ENCODE measurements at regions of chr4 and their contacts with region 1.

Region 1: GRCh38 chr4:127965062-127965802 is at the starts of genes ABHD18 and MFSD8:
- DNase-seq: peak; percentile 98 to 99
- ATAC-seq: peak; percentile 97 to 98
- H3K4me3 ChIP-seq: peak within 1 kb of the TSS; percentile 78 to 93 (median 86)
- H3K27ac ChIP-seq: peak within 1 kb of the TSS; percentile 95 to 99 (median 97)
- H3K4me1 ChIP-seq: peaks cover 8 to 18% of the 10 kb centered on the region in 2 donors
- H3K27me3 ChIP-seq: no peaks in the 10 kb centered on the region
- CTCF ChIP-seq: peak; percentile 60 to 70 (median 69)
- POLR2A ChIP-seq: peak; percentile 80 to 87
- total RNA-seq, gene ABHD18: 3.9 to 7.8 (median 5.8) TPM
- total RNA-seq, gene MFSD8: 5.6 to 13.2 (median 7.5) TPM

Region 2: GRCh38 chr4:127632420-127633403 is 332.5 kb before region 1 on chr4 and contains the start of gene INTU:
- in situ Hi-C with region 1: loop called in 2 of 4 experiments (anchors 25 kb)
- intact Hi-C with region 1: loop called (anchors 10 kb)
- DNase-seq: peak; percentile 89 to 91
- ATAC-seq: peak; percentile 100
- H3K4me3 ChIP-seq: peak within 1 kb of the TSS; percentile 62 to 94 (median 76)
- H3K27ac ChIP-seq: peak within 1 kb of the TSS in 2 of 4 donors; percentile 34 to 58
- H3K4me1 ChIP-seq: peaks cover 12 to 18% of the 10 kb centered on the region in 2 donors
- H3K27me3 ChIP-seq: no peaks in the 10 kb centered on the region
- CTCF ChIP-seq: no peak
- POLR2A ChIP-seq: no peak
- total RNA-seq, gene INTU: 0.65 to 2.6 (median 1.7) TPM

Region 3: GRCh38 chr4:127782274-127783025 is 182.8 kb before region 1 on chr4 and contains the start of gene HSPA4L:
- in situ Hi-C with region 1: loop called in 1 of 4 experiments (anchors 25 kb)
- intact Hi-C with region 1: loop called (anchors 1 kb)
- DNase-seq: peak; percentile 46 to 74
- ATAC-seq: peak; percentile 85 to 91
- H3K4me3 ChIP-seq: peak within 1 kb of the TSS; percentile 68 to 96 (median 80)
- H3K27ac ChIP-seq: peak within 1 kb of the TSS; percentile 67 to 80 (median 78)
- H3K4me1 ChIP-seq: peaks cover 0 to 10% of the 10 kb centered on the region in 2 donors
- H3K27me3 ChIP-seq: no peaks in the 10 kb centered on the region
- CTCF ChIP-seq: peak; percentile 22 to 34 (median 31)
- POLR2A ChIP-seq: peak; percentile 36 to 73
- total RNA-seq, gene HSPA4L: 0.36 to 1.2 (median 0.74) TPM

Region 4: DNA sequence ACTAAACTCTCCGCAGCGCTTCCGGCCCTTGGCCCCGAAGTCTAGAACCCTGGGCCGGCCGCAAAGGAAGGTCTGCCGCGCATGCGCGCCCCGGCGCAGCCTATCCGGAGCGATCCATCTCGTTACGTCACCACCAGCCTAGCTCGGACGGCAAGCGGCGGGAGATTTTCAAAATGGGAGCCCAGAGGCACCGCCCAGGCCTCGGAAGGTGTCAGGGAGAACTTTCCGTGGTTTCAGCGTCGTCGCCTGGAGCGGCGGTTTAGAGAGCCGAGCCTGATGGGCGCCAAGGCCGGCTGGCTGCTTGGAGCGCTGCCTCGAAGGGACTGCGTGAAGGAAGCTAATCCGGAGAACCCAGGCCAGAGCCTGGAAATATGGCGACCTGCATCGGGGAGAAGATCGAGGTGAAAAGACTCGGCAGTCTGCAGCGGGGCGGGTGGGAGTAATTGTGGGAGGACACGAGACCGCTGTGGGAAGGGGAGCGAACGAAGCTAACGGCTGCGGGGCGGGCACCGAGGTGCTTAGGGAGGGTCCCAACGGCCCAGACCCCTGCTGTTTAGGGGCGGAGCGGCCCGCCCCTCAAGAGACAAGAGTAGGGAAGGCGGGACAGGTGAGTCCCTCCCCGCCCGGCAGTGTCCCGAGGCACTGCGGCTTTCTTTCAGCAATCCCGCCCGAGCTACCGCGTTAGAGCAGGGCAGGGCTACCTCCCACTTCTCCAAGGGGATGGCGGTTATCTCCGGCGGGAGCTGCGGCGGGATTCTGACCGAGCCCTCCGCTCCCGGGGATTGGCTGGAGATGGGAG is 84.3 kb before region 1 on chr4 and contains the start of gene PLK4:
- in situ Hi-C with region 1: no loop called
- intact Hi-C with region 1: loop called (anchors 5 kb)
- DNase-seq: peak; percentile 79 to 83
- ATAC-seq: peak; percentile 96 to 98
- H3K4me3 ChIP-seq: peak within 1 kb of the TSS; percentile 63 to 83 (median 74)
- H3K27ac ChIP-seq: peak within 1 kb of the TSS; percentile 6 to 65 (median 59)
- H3K4me1 ChIP-seq: peaks cover 7 to 10% of the 10 kb centered on the region in 2 donors
- H3K27me3 ChIP-seq: no peaks in the 10 kb centered on the region
- CTCF ChIP-seq: no peak
- POLR2A ChIP-seq: peak in 1 of 2 donors; percentile 4
- total RNA-seq, gene PLK4: 0.11 to 0.98 TPM in 2 of 4 donors, not detected in the others

Region 5: DNA sequence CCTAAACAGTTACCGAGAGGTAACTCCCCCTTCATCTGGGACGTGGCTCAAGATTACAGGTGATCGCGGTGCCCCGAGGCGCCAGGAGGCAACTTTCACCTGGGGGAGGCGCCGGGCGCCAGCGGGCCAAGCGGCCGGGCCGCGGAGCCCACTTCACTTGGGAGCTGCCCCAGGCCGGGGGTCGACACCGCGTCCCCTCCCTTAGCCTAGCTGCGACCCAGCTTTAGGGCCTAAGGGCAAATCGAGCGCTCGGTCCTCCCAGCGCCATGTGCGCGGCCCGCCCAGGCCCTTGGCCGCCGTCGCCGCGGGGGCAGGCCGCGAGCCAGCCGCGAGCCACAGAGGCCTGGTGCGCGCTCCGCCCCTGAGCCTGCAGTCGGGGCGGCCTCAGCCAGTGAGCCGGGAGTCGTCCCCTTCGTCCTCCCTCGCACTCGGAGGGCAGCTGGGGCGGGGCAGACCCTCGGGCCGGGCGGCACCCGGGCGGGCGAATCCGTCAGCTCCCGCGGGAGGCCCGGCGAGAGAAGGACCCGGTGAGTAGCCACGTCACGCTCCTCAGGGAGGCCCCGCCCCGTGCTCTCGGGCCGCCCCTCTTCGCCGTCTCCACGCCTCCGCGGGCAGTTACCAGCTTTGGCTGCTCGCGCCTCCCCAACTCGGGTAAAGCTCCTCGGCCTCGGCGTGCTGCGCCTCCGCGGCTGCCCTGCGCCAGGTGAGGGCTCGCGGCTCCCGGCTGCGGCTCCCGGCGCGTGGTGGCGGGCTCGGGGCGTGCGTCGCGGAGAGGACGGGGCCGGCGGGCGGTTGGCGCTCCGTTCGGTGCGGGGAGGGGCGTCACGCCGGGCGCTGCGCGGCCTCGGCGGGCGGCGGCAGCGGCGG is 95.7 kb after region 1 on chr4 and contains the start of gene LARP1B:
- in situ Hi-C with region 1: loop called in 1 of 4 experiments (anchors 10 kb)
- intact Hi-C with region 1: loop called (anchors 2 kb)
- DNase-seq: peak; percentile 94
- ATAC-seq: peak; percentile 88 to 91
- H3K4me3 ChIP-seq: peak within 1 kb of the TSS; percentile 55 to 95 (median 65)
- H3K27ac ChIP-seq: peak within 1 kb of the TSS; percentile 92 to 99 (median 94)
- H3K4me1 ChIP-seq: peaks cover 10 to 12% of the 10 kb centered on the region in 2 donors
- H3K27me3 ChIP-seq: no peaks in the 10 kb centered on the region
- CTCF ChIP-seq: peak in 1 of 5 experiments; percentile 9
- POLR2A ChIP-seq: peak; percentile 92 to 94
- total RNA-seq, gene LARP1B: 19.5 to 23.5 (median 22.8) TPM

Measured in gastrocnemius medialis (tissue), 4 donors.